OCI-LY7 (cell line): ENCODE measurements at regions of chr10 and their contacts with region 1.

Region 1: DNA sequence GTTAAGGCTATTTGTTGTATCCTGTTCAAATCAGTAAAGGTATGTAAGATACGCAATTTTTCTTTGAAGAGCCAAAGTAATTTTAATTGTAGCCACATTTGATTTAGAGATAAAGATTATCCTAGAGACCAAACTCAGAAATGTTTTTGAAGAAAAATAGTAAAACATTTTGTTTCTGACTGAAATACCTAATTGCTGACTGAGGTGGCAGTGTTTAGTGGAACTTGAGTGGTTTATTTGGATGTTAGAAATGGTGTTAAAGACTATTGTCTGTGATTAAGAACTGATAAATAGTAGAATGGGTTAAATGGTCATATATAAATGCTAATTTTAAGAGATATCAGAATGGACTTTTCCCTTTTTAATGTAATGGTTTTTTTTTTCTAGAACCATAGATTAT is 15.3 kb downstream of the EDRF1 start:
- DNase-seq: no peak
- H3K4me3 ChIP-seq: no peak overlapping the region
- H3K27ac ChIP-seq: no peak overlapping the region
- H3K4me1 ChIP-seq: no peaks in the 10 kb centered on the region
- CTCF ChIP-seq: peak; percentile 56

Region 2: DNA sequence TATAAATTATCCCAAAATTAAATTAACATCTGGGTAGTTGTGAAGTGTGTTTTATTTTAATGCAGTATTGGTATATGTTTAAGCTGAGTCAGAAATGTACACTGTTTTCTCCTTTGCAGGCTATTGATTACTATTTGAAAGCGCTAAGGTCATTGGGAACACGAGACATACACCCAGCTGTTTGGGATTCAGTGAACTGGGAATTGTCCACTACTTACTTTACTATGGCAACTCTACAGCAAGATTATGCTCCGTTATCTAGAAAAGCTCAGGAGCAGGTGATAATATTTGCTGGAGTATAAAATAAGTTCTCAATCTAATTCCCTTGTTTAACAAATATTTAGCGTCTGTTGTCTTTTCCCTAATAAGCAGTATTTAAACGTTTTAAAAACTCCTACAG is 12.6 kb after region 1 on chr10:
- CTCF ChIA-PET with region 1: no interaction called
- POLR2A ChIA-PET with region 1: interaction called, 5 read pairs
- intact Hi-C with region 1: loop called (anchors 2 kb)
- DNase-seq: no peak
- H3K4me3 ChIP-seq: no peak overlapping the region
- H3K27ac ChIP-seq: no peak overlapping the region
- H3K4me1 ChIP-seq: no peaks in the 10 kb centered on the region
- CTCF ChIP-seq: no peak

Region 3: GRCh38 chr10:125961739-125962138 is 226.9 kb after region 1 on chr10:
- CTCF ChIA-PET with region 1: no interaction called
- POLR2A ChIA-PET with region 1: no interaction called
- intact Hi-C with region 1: no loop called
- DNase-seq: no peak
- H3K4me3 ChIP-seq: no peak overlapping the region
- H3K27ac ChIP-seq: no peak overlapping the region
- H3K4me1 ChIP-seq: no peaks in the 10 kb centered on the region
- CTCF ChIP-seq: no peak